Cardiac septum (tissue), 1 donor: ENCODE measurements at regions of chr18 and their contacts with region 1.

Region 1: GRCh38 chr18:61643884-61644647 is 248.7 kb downstream of the RNF152 start:
- DNase-seq: no peak

Region 2: DNA sequence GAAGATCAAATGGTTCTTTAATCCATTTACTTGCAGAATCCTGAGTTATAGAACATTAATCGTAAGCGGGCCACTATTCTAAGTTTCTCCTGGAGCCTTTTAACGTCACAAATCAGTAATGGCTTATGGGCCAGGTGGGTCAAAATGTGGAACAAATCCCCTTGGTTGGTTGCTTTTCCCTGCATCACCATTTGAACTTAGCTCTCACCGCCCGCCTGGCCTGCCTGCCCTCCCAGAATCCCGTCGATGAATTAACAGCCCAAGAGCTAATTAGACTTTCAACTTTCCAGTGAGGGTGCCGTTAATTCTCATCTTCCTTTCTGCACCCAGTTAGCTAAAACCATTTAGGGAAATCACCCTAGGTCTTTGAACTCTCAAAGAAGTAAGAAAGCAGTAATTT is 43.3 kb after region 1 on chr18:
- intact Hi-C with region 1: loop called (anchors 5 kb)
- DNase-seq: no peak

Region 3: DNA sequence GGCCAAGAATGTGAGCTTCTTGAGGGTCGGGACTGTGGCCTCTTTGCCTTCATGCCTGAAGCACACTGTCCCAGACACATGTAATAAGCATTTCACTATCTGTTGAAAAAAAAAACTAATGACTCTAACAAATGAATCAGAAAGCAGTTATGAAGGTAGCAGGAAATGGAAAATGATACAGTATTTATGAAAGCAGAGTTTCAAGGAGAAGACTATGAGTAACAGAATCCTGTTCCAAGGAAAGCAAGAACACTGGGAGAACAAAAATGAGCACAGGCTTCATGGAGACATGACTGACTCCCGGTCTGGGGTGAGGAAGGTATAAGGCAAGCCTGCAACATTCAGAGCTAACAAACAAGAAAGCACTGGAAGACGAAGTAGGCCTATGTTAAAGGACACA is 57.9 kb after region 1 on chr18:
- intact Hi-C with region 1: no loop called
- DNase-seq: no peak

Region 4: DNA sequence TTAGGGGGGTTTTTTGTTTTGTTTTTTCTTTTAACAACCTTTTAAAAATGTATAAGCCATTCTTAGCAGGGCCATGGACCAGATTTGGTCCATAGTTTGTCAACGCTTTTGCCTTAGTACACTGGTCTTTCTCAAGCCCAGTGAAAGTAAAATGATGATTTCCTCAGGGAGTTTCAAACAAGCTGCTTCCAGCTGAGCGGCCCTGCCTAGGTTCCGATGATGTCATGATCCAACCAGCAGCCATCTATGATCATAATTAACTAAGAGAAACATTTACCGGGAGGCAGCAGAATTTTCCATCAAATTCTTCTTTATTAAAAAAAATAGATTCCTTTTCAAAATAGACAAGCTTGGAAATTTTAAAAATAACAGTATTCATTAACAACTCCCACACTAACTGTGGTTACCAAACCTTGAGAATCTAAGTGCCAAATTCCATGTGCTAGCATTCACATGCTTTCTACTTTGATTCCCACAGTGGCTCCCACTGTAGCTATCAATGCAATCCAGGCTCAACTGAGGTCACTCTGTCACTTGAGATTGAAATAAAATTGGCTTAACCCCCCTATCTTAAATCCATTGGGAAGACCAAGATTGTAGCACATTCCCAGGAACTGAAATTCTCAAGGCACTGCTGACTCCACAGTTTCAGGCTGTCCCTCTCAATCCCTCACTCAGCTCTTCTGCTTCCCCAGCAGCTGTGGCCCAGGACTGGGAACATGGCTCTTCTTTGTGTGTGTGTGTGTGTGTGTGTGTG is 99.9 kb after region 1 on chr18:
- intact Hi-C with region 1: no loop called
- DNase-seq: no peak

Region 5: DNA sequence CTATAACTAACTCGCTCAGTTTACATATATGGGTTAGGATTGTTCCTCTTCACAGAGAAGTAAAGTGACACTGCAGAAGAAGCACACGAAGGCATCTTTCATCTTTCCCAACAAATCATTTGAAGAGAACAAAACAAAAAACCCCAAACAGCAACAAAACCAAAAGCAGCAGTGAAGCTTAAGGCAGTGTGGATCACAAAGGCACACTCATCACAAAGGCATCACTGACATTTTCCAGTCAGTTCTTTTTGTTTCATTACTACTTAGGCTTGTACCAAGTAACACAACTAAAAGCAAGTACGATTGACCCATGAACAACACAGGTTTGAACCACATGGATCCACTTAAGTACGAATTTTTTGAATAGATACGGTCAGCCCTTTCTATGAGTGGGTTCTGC is 173.0 kb after region 1 on chr18:
- intact Hi-C with region 1: no loop called
- DNase-seq: no peak

Region 6: DNA sequence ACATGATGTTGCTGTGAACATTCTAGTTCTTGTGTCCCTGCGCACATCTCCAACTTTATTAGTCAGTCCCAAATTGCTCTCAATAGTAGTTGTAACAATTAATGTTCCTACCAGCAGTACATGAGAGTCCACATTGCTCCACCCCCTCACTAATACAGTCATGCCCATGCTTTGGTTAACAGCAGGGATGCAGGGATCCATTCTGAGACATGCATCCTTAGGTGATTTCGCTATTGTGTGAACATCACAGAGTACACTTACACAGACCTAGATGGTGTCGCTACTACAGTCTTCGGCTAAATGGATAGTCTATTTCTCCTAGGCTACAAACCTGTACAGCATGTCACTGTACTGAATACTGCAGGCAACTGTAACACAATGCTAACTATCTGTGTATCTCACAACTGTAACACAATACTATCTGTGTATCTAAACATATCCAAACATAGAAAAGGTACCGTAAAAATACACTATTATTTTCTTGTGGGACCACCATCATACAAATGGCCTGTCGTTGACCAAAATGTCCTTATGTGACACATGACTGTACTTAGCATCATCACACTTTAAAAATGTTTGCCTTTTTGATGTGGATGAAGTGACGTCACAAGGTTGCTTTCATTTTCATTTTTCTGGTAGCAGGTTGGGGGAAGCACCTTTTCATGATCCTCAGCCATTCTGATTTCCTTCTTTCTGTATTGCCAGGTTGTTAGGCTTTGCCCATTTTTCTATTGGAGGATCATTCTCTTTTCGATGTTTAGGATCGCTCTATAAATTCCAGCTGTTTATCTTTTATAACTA is 331.7 kb after region 1 on chr18:
- intact Hi-C with region 1: no loop called
- DNase-seq: no peak